Ovary (tissue), 10 donors: ENCODE measurements at regions of chr14 and their contacts with region 1.

Region 1: DNA sequence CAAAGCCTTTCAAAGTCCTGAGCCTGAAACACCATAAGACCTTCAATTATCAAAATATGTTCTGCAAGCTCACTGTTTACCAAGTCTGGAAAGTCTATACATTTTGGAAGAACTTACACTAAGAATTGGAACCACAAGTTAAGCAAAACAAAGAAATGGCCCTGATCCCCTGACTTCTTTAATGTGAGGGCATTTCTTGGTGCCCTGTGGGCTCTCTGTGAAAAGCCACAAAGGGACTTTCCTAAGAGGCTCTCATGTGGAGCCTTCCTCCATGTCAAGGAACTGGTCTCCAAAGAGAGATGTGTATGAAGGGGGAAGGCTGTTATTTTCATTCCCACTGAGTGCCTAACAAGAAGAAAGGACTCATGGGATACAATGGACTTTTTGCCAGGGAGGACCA is 13.5 kb upstream of the MYH6 start:
- DNase-seq: no peak
- H3K4me3 ChIP-seq: no peak overlapping the region
- H3K27ac ChIP-seq: no peak overlapping the region
- H3K4me1 ChIP-seq: no peaks in the 10 kb centered on the region
- H3K27me3 ChIP-seq: no peaks in the 10 kb centered on the region
- CTCF ChIP-seq: no peak
- EP300 ChIP-seq: no peak
- POLR2A ChIP-seq: no peak

Region 2: GRCh38 chr14:23670481-23670880 is 248.9 kb after region 1 on chr14:
- intact Hi-C with region 1: loop called in 1 of 4 experiments (anchors 5 kb)
- DNase-seq: no peak
- H3K4me3 ChIP-seq: no peak overlapping the region
- H3K27ac ChIP-seq: no peak overlapping the region
- H3K4me1 ChIP-seq: peaks cover 4% of the 10 kb centered on the region
- H3K27me3 ChIP-seq: no peaks in the 10 kb centered on the region
- CTCF ChIP-seq: no peak
- EP300 ChIP-seq: no peak
- POLR2A ChIP-seq: no peak